Heart right ventricle (tissue), 16 donors: ENCODE measurements at regions of chr2 and their contacts with region 1.

Region 1: DNA sequence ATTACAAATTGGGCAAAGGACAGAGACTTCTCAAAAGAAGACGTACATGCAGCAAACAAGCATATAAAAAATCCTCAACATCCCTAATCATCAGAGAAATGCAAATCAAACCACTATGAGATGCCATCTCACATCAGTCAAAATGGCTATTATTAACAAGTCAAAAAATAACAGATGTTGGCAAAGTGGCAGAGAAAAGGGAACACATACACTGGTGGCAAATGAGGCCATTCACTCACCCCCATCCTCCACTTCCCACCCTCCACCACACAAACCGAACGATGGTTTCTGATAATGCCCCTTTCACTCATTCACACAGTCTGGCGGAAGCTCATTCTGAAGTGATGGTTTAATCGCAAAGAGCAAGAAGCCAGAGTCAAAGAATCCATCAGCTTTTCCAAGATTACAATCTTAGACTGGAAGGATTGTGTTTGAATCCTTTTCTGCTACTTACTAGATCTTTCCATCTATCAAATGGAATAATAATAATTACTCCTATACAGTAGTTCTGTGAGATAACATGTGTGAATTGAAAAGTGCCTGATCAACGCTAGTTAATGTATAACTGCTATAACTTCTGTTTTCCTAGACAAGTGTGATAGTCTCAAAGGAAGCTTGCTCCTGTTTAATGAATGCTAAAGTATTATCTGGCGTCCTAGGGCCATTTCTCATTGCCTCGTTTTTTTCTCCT is 16.9 kb upstream of the CD28 start:
- DNase-seq: no peak
- ATAC-seq: no peak
- H3K4me3 ChIP-seq: no peak overlapping the region
- H3K27ac ChIP-seq: peak overlapping the region in 9 of 10 donors; percentile 11 to 91 (median 56)
- H3K4me1 ChIP-seq: peaks cover 27 to 98% (median 88%) of the 10 kb centered on the region in 9 donors
- H3K27me3 ChIP-seq: no peaks in the 10 kb centered on the region
- CTCF ChIP-seq: no peak

Region 2: GRCh38 chr2:203650860-203651613 is 38.5 kb before region 1 on chr2:
- intact Hi-C with region 1: loop called in 1 of 10 experiments (anchors 5 kb)
- DNase-seq: peak in 1 of 2 donors; percentile 42
- ATAC-seq: peak; percentile 70 to 85 (median 82)
- H3K4me3 ChIP-seq: no peak overlapping the region
- H3K27ac ChIP-seq: peak overlapping the region in 9 of 10 donors; percentile 6 to 82 (median 58)
- H3K4me1 ChIP-seq: peaks cover 5 to 41% (median 31%) of the 10 kb centered on the region in 9 donors
- H3K27me3 ChIP-seq: no peaks in the 10 kb centered on the region
- CTCF ChIP-seq: peak in 8 of 9 donors; percentile 12 to 61 (median 46)

Region 3: DNA sequence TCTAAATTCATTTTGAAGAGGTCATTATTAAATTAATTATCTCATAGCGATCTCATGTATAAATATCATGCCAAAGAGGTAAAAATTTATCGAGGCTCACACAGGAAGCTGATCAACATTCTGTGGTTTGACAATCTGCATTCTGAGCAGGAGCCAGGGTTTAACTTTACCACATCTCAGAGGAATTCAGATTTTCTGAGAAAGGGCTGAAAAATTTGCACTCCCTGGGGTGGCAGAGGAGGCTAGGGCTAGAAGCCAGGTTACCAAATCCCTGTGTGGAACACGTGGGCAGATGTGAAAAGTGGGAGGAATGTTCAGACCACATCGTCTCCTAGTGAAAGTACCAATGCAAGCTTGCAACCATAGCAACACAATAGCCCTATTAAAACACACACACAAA is 114.5 kb after region 1 on chr2:
- intact Hi-C with region 1: loop called in 1 of 10 experiments (anchors 10 kb)
- DNase-seq: peak in 1 of 2 donors; percentile 54
- ATAC-seq: peak; percentile 47 to 94 (median 80)
- H3K4me3 ChIP-seq: no peak overlapping the region
- H3K27ac ChIP-seq: peak overlapping the region in 5 of 10 donors; percentile 4 to 54 (median 29)
- H3K4me1 ChIP-seq: peaks cover 0 to 46% (median 0%) of the 10 kb centered on the region in 9 donors
- H3K27me3 ChIP-seq: no peaks in the 10 kb centered on the region
- CTCF ChIP-seq: no peak

Region 4: GRCh38 chr2:203900253-203900652 is 210.7 kb after region 1 on chr2:
- intact Hi-C with region 1: loop called in 1 of 10 experiments (anchors 5 kb)
- DNase-seq: no peak
- ATAC-seq: no peak
- H3K4me3 ChIP-seq: no peak overlapping the region
- H3K27ac ChIP-seq: no peak overlapping the region
- H3K4me1 ChIP-seq: peaks cover 0 to 23% (median 0%) of the 10 kb centered on the region in 9 donors
- H3K27me3 ChIP-seq: no peaks in the 10 kb centered on the region
- CTCF ChIP-seq: no peak